WTC11 (cell line): ENCODE measurements at regions of chr3 and their contacts with region 1.

Region 1: GRCh38 chr3:147383617-147384016 is 22.7 kb downstream of the ZIC4 start:
- DNase-seq: peak; percentile 53
- ATAC-seq: peak; percentile 36
- H3K4me3 Mint-ChIP-seq: no peak overlapping the region
- H3K27ac Mint-ChIP-seq: no peak overlapping the region
- H3K4me1 Mint-ChIP-seq: peaks cover 96% of the 10 kb centered on the region
- H3K27me3 Mint-ChIP-seq: peaks cover 97% of the 10 kb centered on the region
- CTCF ChIP-seq: no peak; the same call in 1 of the 2 replicates

Region 2: DNA sequence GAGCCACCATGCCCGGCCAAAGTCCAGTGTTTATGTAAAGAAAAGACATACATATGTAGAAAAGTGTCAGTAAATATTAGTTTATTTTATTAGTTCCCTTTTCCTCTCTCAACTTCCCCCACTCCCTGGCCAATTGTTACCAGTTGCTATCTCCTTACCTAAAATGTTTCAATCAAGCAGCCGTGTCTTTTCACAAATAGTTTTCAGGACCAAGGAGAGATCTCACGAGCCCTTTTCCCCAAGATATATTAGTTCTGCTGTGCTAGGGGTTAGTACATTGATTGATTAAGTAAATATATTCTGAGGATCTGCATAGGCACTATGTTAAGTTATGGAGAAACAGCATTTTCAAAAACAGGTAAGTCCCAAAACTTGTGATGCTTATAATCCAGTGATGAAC is 64.7 kb before region 1 on chr3:
- CTCF ChIA-PET with region 1: no interaction called
- POLR2A ChIA-PET with region 1: no interaction called
- DNase-seq: no peak
- ATAC-seq: no peak
- H3K4me3 Mint-ChIP-seq: no peak overlapping the region
- H3K27ac Mint-ChIP-seq: no peak overlapping the region
- H3K4me1 Mint-ChIP-seq: peaks cover 8% of the 10 kb centered on the region
- H3K27me3 Mint-ChIP-seq: no peaks in the 10 kb centered on the region; the same call in 1 of the 2 replicates
- CTCF ChIP-seq: no peak

Region 3: GRCh38 chr3:147354623-147355022 is 29.0 kb before region 1 on chr3:
- CTCF ChIA-PET with region 1: interaction called, 70 read pairs
- POLR2A ChIA-PET with region 1: no interaction called
- DNase-seq: peak; percentile 54
- ATAC-seq: peak; percentile 26
- H3K4me3 Mint-ChIP-seq: peak overlapping the region; percentile 63
- H3K27ac Mint-ChIP-seq: no peak overlapping the region
- H3K4me1 Mint-ChIP-seq: peaks cover 50% of the 10 kb centered on the region
- H3K27me3 Mint-ChIP-seq: peaks cover 70% of the 10 kb centered on the region
- CTCF ChIP-seq: no peak

Region 4: DNA sequence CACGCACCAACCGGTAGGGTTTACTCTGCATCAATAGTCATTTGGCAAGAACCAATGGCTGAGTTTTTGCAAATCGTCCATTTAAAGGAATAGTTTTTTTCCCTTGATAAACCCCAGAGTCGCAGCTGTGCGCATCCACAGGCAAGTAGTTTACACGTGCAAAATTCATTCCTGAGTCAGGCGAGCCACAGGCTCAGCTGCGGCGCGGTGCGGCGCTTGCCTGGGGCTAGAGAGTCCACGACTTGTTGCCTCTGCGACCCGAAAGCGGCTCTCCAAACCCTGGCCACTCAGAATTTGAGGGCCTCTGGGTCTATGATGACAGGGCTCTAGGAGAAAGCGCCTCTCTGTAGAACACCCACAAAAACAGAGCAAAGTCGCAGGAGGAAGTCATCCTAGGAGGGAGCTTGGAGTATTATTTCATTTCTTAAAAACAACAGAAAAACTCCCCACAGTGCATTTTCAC is 13.9 kb before region 1 on chr3:
- CTCF ChIA-PET with region 1: interaction called, 25 read pairs
- POLR2A ChIA-PET with region 1: interaction called, 3 read pairs
- DNase-seq: peak; percentile 38
- ATAC-seq: peak; percentile 43
- H3K4me3 Mint-ChIP-seq: peak overlapping the region; percentile 66
- H3K27ac Mint-ChIP-seq: no peak overlapping the region
- H3K4me1 Mint-ChIP-seq: peaks cover 60% of the 10 kb centered on the region
- H3K27me3 Mint-ChIP-seq: peaks cover 98% of the 10 kb centered on the region
- CTCF ChIP-seq: no peak

Region 5: DNA sequence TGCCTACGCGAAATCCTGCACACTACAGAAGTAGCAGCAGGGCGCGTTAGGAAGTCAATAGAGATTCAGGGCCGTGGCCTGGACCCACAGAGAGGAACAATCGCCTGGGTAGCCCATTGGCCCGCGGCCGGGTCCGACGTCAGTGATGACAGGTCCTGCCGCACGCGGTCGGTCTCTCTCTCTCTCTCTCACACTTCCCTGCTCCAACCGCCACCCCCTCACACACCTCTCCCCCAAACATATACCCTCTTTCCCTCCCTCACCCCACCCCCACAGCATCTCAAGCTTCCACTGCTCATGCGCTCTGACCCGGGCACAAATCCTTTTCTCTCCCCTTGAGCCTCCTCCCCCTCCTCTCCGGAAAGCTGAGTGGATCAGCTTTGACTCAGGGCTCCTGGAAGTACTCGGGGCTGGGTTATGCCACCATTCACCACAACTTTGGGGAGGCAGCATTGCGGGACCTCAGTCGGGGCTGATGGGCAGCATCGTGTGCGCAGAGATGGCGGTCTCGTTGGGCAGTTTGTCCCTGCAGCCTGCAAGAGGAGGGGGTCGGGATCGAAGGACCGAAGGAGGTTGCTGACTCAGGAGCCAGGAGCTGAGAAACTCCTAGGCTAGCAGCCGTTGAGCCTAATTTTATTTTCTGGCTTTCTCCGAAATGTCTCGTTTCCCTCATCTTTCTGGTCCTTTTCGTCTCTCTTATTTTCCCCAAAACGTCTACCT is 13.7 kb after region 1 on chr3:
- CTCF ChIA-PET with region 1: interaction called, 47 read pairs
- POLR2A ChIA-PET with region 1: interaction called, 19 read pairs
- DNase-seq: peak; percentile 85
- ATAC-seq: peak; percentile 43
- H3K4me3 Mint-ChIP-seq: peak overlapping the region; percentile 78
- H3K27ac Mint-ChIP-seq: peak overlapping the region; percentile 96
- H3K4me1 Mint-ChIP-seq: peaks cover 79% of the 10 kb centered on the region
- H3K27me3 Mint-ChIP-seq: peaks cover 98% of the 10 kb centered on the region
- CTCF ChIP-seq: no peak

Region 6: DNA sequence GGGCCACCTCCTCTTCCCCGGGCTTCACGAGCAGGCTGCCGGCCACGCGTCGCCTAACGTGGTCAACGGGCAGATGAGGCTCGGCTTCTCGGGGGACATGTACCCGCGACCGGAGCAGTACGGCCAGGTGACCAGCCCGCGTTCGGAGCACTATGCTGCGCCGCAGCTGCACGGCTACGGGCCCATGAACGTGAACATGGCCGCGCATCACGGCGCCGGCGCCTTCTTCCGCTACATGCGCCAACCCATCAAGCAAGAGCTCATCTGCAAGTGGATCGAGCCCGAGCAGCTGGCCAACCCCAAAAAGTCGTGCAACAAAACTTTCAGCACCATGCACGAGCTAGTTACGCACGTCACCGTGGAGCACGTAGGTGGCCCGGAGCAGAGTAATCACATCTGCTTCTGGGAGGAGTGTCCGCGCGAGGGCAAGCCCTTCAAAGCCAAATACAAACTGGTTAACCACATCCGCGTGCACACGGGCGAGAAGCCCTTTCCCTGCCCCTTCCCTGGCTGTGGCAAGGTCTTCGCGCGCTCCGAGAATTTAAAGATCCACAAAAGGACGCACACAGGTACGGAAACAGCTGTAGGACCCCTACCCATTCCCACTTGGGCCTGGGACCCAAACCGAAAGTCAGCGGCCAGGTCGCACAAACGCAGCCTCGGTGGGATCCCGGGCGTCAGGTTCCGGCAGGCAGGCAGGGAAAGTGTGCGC is 27.1 kb after region 1 on chr3:
- CTCF ChIA-PET with region 1: interaction called, 25 read pairs
- POLR2A ChIA-PET with region 1: no interaction called
- DNase-seq: peak; percentile 44
- ATAC-seq: peak; percentile 3; the same call in 1 of the 2 replicates
- H3K4me3 Mint-ChIP-seq: peak overlapping the region; percentile 73
- H3K27ac Mint-ChIP-seq: peak overlapping the region; percentile 15; the same call in 1 of the 2 replicates
- H3K4me1 Mint-ChIP-seq: peaks cover 76% of the 10 kb centered on the region
- H3K27me3 Mint-ChIP-seq: peaks cover 99% of the 10 kb centered on the region
- CTCF ChIP-seq: no peak

Region 7: DNA sequence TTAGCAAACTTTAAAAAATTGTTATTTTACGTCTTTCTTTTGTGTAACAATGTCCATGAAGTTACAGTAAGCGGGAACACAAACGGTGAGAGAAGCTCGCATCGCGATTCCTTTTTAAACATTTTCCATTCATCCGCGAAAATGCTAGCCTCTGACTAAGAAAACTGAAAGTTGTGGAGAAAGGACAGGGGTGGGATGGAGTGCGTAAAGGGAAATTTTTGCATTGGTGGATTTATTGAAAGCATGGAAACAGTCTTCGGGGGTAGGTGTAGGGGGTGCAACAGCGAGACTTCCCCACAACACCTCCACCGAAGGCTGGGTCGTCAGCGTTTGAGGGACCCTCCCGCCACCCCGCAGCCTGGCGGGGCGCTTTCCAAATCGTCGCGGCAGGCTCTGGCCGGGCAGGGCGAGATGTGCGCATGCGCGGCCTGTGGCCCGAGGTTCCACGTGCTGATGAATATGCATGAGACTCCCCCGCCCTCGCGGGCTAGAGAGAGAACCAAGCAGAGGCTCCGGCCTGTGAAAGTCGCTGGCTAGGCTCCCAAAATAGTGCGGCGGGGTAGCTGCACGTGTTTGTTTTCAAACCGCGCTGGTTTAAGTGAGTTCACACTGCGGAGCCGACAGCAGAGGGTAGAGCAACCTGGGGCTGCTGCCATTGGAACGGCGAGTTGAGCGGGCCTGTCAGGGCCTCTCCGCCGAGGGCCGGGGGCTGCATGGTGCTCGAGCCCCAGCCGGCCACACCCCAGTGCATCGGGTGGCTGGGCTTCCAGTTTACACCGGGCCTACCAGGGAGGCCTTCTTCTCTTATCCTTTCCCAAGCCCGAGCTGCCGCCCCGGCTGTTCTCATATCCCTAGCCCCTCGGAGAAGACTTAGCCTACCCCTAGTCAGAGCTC is 35.4 kb after region 1 on chr3:
- CTCF ChIA-PET with region 1: interaction called, 40 read pairs
- POLR2A ChIA-PET with region 1: no interaction called
- DNase-seq: peak; percentile 94
- ATAC-seq: peak; percentile 58
- H3K4me3 Mint-ChIP-seq: peak overlapping the region; percentile 73
- H3K27ac Mint-ChIP-seq: peak overlapping the region; percentile 72; the same call in 1 of the 2 replicates
- H3K4me1 Mint-ChIP-seq: peaks cover 91% of the 10 kb centered on the region
- H3K27me3 Mint-ChIP-seq: peaks cover 100% of the 10 kb centered on the region
- CTCF ChIP-seq: no peak

Region 8: GRCh38 chr3:147616998-147617619 is 233.5 kb after region 1 on chr3:
- CTCF ChIA-PET with region 1: interaction called, 15 read pairs
- POLR2A ChIA-PET with region 1: no interaction called
- DNase-seq: no peak
- ATAC-seq: no peak
- H3K4me3 Mint-ChIP-seq: no peak overlapping the region
- H3K27ac Mint-ChIP-seq: no peak overlapping the region
- H3K4me1 Mint-ChIP-seq: peaks cover 27% of the 10 kb centered on the region
- H3K27me3 Mint-ChIP-seq: no peaks in the 10 kb centered on the region
- CTCF ChIP-seq: peak; percentile 59